Astrocyte of the cerebellum (primary cell): ENCODE measurements at regions of chr5 and their contacts with region 1.

Region 1: DNA sequence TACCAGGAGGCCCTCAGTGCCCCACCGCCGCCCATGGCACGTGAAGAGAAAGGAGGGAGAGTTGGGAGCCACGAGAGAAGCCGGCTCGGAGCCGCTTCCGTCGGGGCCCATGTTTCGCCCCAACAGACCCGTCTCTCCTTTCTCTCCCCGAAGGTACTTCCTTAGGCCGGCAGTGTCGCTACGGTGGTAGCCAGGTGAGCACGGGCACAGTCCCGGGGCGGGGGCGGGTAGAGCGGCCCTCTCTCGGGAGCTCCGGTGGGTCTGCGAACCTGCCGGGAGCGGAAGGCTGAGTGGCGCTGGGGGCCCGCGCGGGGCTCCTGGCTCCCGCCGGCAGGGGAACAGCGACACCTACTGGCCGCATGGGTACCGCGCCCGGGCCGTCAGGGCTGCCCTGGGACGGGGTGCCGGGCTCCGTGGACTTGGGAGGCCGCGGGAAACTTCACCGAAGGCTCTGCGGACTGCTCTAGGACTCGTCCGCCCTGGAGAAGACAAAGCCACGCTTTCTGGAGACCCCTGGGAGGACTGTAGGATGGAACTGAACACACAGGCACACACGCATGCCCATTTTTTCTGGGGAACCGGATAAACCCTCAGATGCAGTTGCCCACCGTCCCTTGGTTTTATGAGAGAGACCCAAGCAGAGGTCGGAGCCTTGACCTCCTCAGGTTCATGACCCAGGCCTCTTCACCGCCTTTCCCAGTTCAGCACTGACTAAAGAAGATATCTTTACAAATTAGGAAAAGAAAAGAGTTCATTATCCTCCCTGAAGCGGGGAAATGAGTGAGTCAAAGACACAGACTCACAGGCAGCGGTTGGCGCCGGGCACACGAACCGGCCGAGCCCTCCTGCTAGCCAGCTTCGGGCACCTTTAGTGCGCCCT is 202.5 kb downstream of the MEF2C start:
- DNase-seq: no peak
- H3K4me3 ChIP-seq: peak overlapping the region; percentile 68
- CTCF ChIP-seq: peak; percentile 89

Region 2: DNA sequence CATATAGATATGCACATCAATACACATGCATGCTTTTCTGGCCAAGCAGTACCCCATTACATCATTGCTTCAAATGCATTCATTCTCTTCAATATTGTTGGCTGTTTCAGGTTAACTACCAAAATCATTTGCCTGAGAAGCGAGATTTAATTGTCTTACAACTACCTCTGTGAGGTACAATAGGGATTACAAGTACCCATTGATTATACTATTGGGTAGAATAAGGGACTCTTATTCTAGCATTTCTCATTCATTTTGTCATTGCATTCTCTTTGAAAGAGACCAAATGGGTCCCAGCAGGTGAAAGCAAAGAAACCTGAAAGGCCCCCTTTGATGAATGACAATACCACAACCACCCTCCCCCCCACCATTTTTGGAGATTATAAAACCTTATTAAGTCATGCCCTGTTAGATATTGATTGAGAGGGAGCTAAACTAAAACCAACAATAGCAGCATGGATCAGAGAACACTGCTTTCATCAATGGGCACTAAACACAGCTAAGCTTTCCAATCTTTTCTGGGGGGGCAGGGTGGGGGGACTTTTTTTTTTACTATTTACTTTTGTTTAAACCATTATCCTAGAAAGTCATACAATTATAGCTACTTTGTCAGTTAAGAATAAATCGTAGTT is 892.8 kb before region 1 on chr5:
- in situ Hi-C with region 1: loop called (anchors 5 kb)
- DNase-seq: no peak
- H3K4me3 ChIP-seq: no peak overlapping the region
- CTCF ChIP-seq: no peak